Mammary epithelial cell (primary cell): ENCODE measurements at regions of chr2 and their contacts with region 1.

Region 1: GRCh38 chr2:9142551-9143263 is 63.9 kb upstream of the ASAP2 start:
- DNase-seq: peak; percentile 85
- H3K4me3 ChIP-seq: peak overlapping the region in 2 of 3 experiments; percentile 10 to 19
- H3K27ac ChIP-seq: peak overlapping the region; percentile 48
- H3K4me1 ChIP-seq: peaks cover 7% of the 10 kb centered on the region
- H3K27me3 ChIP-seq: no peaks in the 10 kb centered on the region
- CTCF ChIP-seq: peak; percentile 74 to 98

Region 2: GRCh38 chr2:8882094-8882493 is 260.6 kb before region 1 on chr2:
- CTCF ChIA-PET with region 1: no interaction called
- dilution Hi-C with region 1: no loop called
- in situ Hi-C with region 1: loop called (anchors 10 kb)
- intact Hi-C with region 1: loop called (anchors 1 kb)
- DNase-seq: peak; percentile 39
- H3K4me3 ChIP-seq: no peak overlapping the region
- H3K27ac ChIP-seq: no peak overlapping the region
- H3K4me1 ChIP-seq: peaks cover 3% of the 10 kb centered on the region
- H3K27me3 ChIP-seq: no peaks in the 10 kb centered on the region
- CTCF ChIP-seq: peak; percentile 53 to 62

Region 3: GRCh38 chr2:9234680-9235387 is 92.1 kb after region 1 on chr2:
- CTCF ChIA-PET with region 1: no interaction called
- dilution Hi-C with region 1: loop called (anchors 5 kb)
- in situ Hi-C with region 1: no loop called
- intact Hi-C with region 1: loop called (anchors 1 kb)
- DNase-seq: peak; percentile 98
- H3K4me3 ChIP-seq: peak overlapping the region in 2 of 3 experiments; percentile 8 to 26
- H3K27ac ChIP-seq: peak overlapping the region; percentile 92
- H3K4me1 ChIP-seq: peaks cover 94% of the 10 kb centered on the region
- H3K27me3 ChIP-seq: no peaks in the 10 kb centered on the region
- CTCF ChIP-seq: no peak

Region 4: GRCh38 chr2:9333591-9334171 is 191.0 kb after region 1 on chr2:
- CTCF ChIA-PET with region 1: no interaction called
- dilution Hi-C with region 1: no loop called
- in situ Hi-C with region 1: loop called (anchors 10 kb)
- intact Hi-C with region 1: loop called (anchors 1 kb)
- DNase-seq: peak; percentile 71
- H3K4me3 ChIP-seq: no peak overlapping the region
- H3K27ac ChIP-seq: no peak overlapping the region
- H3K4me1 ChIP-seq: peaks cover 13% of the 10 kb centered on the region
- H3K27me3 ChIP-seq: no peaks in the 10 kb centered on the region
- CTCF ChIP-seq: peak; percentile 75 to 85

Region 5: DNA sequence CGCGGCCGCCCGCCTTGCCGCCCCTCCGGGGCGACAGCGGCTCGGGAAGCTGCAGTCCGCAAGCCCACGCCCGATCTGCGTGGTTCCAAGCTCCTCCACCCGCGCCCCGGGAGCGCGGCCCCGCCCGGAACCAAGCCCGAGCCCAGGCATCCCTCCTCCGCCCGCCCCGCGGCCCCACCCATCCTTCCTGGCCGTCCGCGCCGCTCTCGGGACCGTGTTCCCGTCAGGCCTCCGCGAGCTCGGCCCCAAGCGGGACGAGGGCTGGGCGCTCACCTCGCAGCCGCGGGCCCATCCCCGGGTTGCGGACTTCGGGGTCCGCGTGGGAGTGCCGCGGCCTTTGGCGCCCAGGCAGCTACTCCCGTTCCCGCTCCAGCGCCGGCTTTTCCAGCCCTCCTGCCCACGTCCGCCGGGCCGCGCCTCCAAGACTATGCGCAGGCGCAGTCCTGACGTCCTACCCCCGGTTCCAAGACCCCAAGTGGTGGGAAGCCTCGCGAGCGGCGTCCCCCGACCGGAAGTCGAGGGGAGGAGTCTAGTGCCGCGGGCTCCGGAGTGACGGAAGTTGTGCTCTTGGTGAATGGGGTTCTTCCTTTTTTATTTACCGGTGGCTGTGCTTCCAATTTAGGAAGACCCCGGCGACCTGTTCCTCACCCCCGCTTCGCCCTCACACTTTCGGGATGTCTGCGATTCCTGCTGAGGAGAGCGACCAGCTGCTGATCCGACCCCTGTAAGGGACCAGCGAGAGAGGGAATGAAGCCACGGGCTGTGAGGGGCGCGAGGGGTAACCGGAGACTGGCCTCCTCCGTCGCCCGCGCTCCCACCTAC is 280.6 kb after region 1 on chr2 and contains the starts of genes CPSF3 and ITGB1BP1:
- CTCF ChIA-PET with region 1: no interaction called
- dilution Hi-C with region 1: no loop called
- in situ Hi-C with region 1: no loop called
- intact Hi-C with region 1: loop called (anchors 2 kb)
- DNase-seq: peak; percentile 97
- H3K4me3 ChIP-seq: peak within 1 kb of the TSS; percentile 70 to 92 (median 90)
- H3K27ac ChIP-seq: peak within 1 kb of the TSS; percentile 74
- H3K4me1 ChIP-seq: peaks cover 16% of the 10 kb centered on the region
- H3K27me3 ChIP-seq: no peaks in the 10 kb centered on the region
- CTCF ChIP-seq: no peak
- total RNA-seq, gene CPSF3: 38.8 to 40.7 TPM
- total RNA-seq, gene ITGB1BP1: 20.3 to 155 TPM